ENCODE measurements at regions of chr1 and their contacts with region 1.

Region 1: DNA sequence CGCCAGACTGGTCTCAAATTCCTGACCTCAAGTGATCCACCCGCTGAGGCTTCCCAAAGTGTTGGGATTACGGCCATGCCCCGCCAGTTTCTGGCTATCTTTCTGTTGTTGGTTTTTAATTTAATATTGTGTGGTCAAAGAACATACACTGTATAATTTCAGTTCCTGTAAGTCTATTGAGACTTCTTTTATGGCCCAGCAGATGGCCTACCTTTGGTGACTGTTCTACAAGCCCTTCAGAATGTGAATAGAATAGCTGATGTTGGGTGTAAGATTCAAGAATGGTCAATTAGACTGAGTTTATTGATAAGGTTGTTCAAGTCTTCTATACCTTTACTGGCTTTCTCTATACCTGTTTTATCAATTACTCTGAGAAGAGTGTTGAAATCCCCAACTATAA is 10.7 kb downstream of the HES2 start:
- DNase-seq: no peak

Region 2: GRCh38 chr1:6359216-6360116 is 49.6 kb before region 1 on chr1:
- intact Hi-C with region 1: loop called (anchors 5 kb)
- DNase-seq: no peak